Mammary epithelial cell (primary cell): ENCODE measurements at regions of chr14 and their contacts with region 1.

Region 1: GRCh38 chr14:21039585-21040369 is 2.4 kb upstream of the RNASE7 start:
- DNase-seq: peak; percentile 66
- H3K4me3 ChIP-seq: no peak overlapping the region
- H3K27ac ChIP-seq: no peak overlapping the region
- H3K4me1 ChIP-seq: peaks cover 58% of the 10 kb centered on the region
- H3K27me3 ChIP-seq: no peaks in the 10 kb centered on the region
- CTCF ChIP-seq: peak; percentile 67 to 82

Region 2: DNA sequence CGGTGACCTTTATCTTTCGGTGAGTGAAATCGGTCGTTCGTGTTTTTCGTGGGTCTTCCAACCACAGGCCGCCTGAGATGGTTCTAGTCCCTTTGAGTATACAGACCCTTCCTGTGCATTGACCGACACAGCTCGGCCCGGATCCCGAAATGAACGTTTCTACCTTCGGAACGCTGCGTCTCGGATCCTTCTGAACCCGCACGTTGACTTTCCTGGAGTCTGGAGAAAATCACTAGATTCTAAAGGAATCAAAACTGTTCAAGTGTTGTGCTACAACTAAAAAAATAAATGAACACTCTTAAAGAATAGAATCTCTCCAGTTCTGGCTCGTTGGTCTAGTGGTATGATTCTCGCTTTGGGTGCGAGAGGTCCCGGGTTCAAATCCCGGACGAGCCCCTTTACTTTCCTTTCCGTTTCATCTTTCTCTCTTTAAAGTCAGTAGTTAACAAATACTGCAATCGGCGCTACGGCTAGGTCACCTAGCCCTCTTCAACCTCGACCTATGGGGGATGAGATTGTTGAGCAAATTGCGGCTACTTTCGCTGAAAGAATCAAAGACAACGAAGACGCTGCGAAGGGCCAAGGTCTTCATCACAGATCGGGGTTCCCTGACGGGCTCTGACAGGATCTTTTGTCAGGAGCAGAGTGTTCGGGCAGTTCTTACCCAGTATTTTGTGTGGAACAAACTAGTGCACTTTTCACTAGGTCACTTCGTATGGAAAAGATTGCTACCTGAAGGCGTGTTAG is 406.9 kb before region 1 on chr14:
- CTCF ChIA-PET with region 1: no interaction called
- dilution Hi-C with region 1: no loop called
- in situ Hi-C with region 1: no loop called
- intact Hi-C with region 1: loop called (anchors 5 kb)
- DNase-seq: peak; percentile 85
- H3K4me3 ChIP-seq: peak overlapping the region; percentile 11 to 55 (median 55)
- H3K27ac ChIP-seq: no peak overlapping the region
- H3K4me1 ChIP-seq: peaks cover 18% of the 10 kb centered on the region
- H3K27me3 ChIP-seq: no peaks in the 10 kb centered on the region
- CTCF ChIP-seq: no peak

Region 3: DNA sequence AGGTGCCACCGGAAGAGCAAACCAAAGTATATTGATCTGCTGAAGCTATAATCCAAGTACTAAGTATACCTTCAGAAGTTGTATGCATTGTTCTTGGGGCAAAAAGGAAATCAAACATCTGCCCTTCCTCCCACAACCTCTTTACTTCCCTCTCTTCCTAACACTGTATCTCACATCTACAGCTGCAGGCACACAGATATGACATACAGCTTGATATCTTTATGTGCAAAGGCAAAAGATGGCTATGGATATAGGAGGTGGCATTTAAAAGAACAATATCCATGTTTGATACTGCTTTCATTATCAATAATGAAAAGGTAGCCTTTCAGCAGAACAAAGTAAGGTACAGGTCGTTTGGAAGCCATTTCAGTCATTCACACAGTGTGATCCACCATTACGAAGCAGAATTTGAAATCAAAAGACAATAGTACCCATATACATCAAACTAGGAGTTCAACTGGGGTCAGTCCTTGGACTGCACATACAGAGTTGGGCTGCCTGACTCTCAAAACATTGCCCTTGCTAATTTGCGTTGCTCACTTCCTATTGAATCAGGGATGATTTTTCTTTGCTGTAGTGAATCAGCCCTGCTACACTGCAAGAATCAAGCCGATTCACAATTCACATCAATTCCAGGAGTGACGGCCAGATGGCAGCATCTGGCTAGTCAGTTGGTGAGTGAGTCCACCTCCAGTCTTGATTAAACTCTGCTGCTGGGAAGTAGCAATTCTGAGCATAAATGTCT is 342.3 kb before region 1 on chr14:
- CTCF ChIA-PET with region 1: no interaction called
- dilution Hi-C with region 1: no loop called
- in situ Hi-C with region 1: no loop called
- intact Hi-C with region 1: loop called (anchors 1 kb)
- DNase-seq: peak; percentile 69
- H3K4me3 ChIP-seq: no peak overlapping the region
- H3K27ac ChIP-seq: no peak overlapping the region
- H3K4me1 ChIP-seq: no peaks in the 10 kb centered on the region
- H3K27me3 ChIP-seq: no peaks in the 10 kb centered on the region
- CTCF ChIP-seq: peak; percentile 76 to 81

Region 4: GRCh38 chr14:20970983-20971704 is 68.6 kb before region 1 on chr14:
- CTCF ChIA-PET with region 1: no interaction called
- dilution Hi-C with region 1: no loop called
- in situ Hi-C with region 1: no loop called
- intact Hi-C with region 1: loop called (anchors 1 kb)
- DNase-seq: peak; percentile 74
- H3K4me3 ChIP-seq: peak overlapping the region; percentile 56 to 65 (median 61)
- H3K27ac ChIP-seq: peak overlapping the region; percentile 41
- H3K4me1 ChIP-seq: peaks cover 21% of the 10 kb centered on the region
- H3K27me3 ChIP-seq: no peaks in the 10 kb centered on the region
- CTCF ChIP-seq: peak; percentile 94 to 99

Region 5: GRCh38 chr14:21014761-21015190 is 25.0 kb before region 1 on chr14:
- CTCF ChIA-PET with region 1: interaction called, 34 read pairs
- dilution Hi-C with region 1: no loop called
- in situ Hi-C with region 1: no loop called
- intact Hi-C with region 1: loop called (anchors 1 kb)
- DNase-seq: peak; percentile 68
- H3K4me3 ChIP-seq: no peak overlapping the region
- H3K27ac ChIP-seq: no peak overlapping the region
- H3K4me1 ChIP-seq: no peaks in the 10 kb centered on the region
- H3K27me3 ChIP-seq: no peaks in the 10 kb centered on the region
- CTCF ChIP-seq: peak; percentile 83 to 91

Region 6: DNA sequence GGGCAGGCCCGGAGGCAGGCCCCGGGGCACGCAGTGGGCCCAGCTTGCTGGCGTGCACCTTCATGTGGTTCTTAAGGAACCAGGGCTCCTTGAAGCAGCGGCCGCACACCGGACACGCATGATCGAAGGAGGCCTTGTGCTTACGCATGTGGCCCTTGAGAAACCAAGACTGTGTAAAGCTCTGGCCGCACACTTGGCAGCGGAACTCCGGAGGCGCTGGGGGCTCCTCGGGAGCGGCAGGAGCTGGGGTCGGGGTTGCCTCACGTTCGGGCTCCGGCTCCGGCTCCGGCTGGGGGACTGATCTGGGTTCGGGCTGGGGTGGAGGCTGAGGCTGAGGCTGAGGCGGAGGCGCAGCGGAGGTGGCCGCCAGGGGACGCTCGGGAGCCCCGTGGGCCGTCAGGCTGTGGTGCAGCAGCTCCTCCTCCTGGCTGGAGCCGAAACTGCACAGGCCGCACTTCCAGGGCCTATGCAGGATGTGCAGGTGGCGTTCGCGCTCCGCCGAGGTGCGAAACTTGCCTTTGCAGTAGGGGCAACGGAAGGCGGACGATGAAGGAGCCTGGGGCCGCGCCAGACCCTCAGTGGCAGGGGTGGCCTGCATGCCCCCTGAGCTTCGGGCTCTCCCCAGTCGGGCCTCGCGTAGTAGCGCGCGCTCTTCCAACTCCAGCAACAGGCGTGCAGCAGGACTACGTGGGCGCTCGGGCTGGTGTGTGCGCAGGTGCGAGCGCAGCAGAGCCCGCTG is 52.7 kb after region 1 on chr14:
- CTCF ChIA-PET with region 1: no interaction called
- dilution Hi-C with region 1: no loop called
- in situ Hi-C with region 1: no loop called
- intact Hi-C with region 1: loop called (anchors 1 kb)
- DNase-seq: peak; percentile 56
- H3K4me3 ChIP-seq: no peak overlapping the region
- H3K27ac ChIP-seq: no peak overlapping the region
- H3K4me1 ChIP-seq: peaks cover 19% of the 10 kb centered on the region
- H3K27me3 ChIP-seq: no peaks in the 10 kb centered on the region
- CTCF ChIP-seq: peak; percentile 100